K562 (cell line): ENCODE measurements at regions of chr14 and their contacts with region 1.

Region 1: DNA sequence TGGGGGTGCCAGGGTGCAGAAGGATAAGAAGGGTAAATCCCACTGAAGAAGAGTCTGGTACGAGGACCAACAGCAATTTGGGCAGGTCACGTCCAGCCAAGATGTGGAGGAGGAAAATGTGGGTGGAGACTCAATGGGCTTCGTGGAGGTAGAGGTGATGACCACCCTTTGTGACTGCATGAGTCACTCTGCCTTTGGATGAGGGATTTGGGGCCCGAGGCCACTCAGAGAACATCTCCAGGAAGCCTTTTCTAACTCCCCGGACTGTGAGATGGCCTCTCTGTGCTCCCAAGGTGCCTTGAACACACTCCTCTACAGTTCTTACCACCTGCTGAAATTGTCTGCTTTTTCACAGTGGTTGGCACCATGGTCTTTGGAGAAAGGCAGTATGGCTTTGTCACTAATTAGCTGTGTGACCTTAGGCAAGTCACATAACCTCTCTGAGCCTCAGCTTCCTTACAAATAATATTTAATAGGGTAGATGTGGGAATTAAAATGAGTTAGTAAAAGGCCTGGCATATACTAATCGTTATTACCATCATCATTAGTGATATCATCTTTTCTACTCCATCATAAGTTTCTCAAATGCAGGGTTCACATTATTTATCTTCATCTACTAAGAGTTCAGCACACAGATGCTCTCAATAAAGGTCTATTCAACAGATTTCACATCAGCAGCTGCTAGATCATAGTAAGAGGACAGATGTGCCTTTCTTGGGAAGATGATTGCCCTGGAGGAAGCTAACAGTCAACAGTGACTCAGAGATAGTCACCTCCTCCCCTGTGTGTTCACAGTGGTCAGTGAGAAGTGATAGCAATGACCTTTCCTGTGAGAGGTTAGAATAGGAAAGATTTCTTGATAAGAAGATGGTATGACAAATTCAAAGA is 66.9 kb upstream of the ARHGAP5 start:
- DNase-seq: peak; percentile 37 to 49 (median 42)
- ATAC-seq: peak; percentile 53; the same call in 1 of the 3 replicates
- H3K4me3 ChIP-seq: no peak overlapping the region
- H3K27ac ChIP-seq: no peak overlapping the region; the same call in 2 of the 3 replicates
- H3K4me1 ChIP-seq: peaks cover 0 to 20% of the 10 kb centered on the region in 2 experiments; a peak in 3 of 5 replicates
- H3K27me3 ChIP-seq: no peaks in the 10 kb centered on the region
- CTCF ChIP-seq: no peak
- EP300 ChIP-seq: peak; percentile 65; the same call in 1 of the 2 replicates
- POLR2A ChIP-seq: no peak
- RAD21 ChIP-seq: no peak

Region 2: GRCh38 chr14:31944256-31945073 is 65.8 kb before region 1 on chr14:
- CTCF ChIA-PET with region 1: no interaction called
- POLR2A ChIA-PET with region 1: interaction called, 3 read pairs
- in situ Hi-C with region 1: no loop called
- intact Hi-C with region 1: loop called (anchors 5 kb)
- DNase-seq: peak in 1 of 4 experiments; percentile 15
- ATAC-seq: peak; percentile 39; the same call in 2 of the 3 replicates
- H3K4me3 ChIP-seq: no peak overlapping the region
- H3K27ac ChIP-seq: no peak overlapping the region
- H3K4me1 ChIP-seq: peaks cover 0 to 14% of the 10 kb centered on the region in 2 experiments; a peak in 3 of 5 replicates
- H3K27me3 ChIP-seq: no peaks in the 10 kb centered on the region
- CTCF ChIP-seq: no peak
- EP300 ChIP-seq: no peak
- POLR2A ChIP-seq: no peak
- RAD21 ChIP-seq: no peak

Region 3: GRCh38 chr14:31968107-31968810 is 42.0 kb before region 1 on chr14:
- CTCF ChIA-PET with region 1: no interaction called
- POLR2A ChIA-PET with region 1: no interaction called
- in situ Hi-C with region 1: no loop called
- intact Hi-C with region 1: no loop called
- DNase-seq: no peak
- ATAC-seq: no peak
- H3K4me3 ChIP-seq: no peak overlapping the region
- H3K27ac ChIP-seq: no peak overlapping the region
- H3K4me1 ChIP-seq: peaks cover 0 to 5% of the 10 kb centered on the region in 2 experiments; a peak in 3 of 5 replicates
- H3K27me3 ChIP-seq: no peaks in the 10 kb centered on the region
- CTCF ChIP-seq: no peak
- EP300 ChIP-seq: no peak
- POLR2A ChIP-seq: no peak
- RAD21 ChIP-seq: no peak